ENCODE measurements at regions of chr3 and their contacts with region 1.

Region 1: GRCh38 chr3:149771652-149772271 is 19.5 kb upstream of the COMMD2 start:
- DNase-seq: peak; percentile 48
- ATAC-seq: peak; percentile 51
- H3K4me3 ChIP-seq: no peak overlapping the region
- H3K4me3 Mint-ChIP-seq: no peak overlapping the region
- H3K27ac ChIP-seq: no peak overlapping the region
- H3K27ac Mint-ChIP-seq: no peak overlapping the region
- H3K4me1 ChIP-seq: no peaks in the 10 kb centered on the region
- H3K4me1 Mint-ChIP-seq: no peaks in the 10 kb centered on the region
- H3K27me3 ChIP-seq: no peaks in the 10 kb centered on the region
- H3K27me3 Mint-ChIP-seq: peaks cover 15% of the 10 kb centered on the region
- CTCF ChIP-seq: peak; percentile 75

Region 2: GRCh38 chr3:149752051-149752787 is 19.5 kb before region 1 on chr3 and contains the start of gene COMMD2:
- CTCF ChIA-PET with region 1: interaction called, 14 read pairs
- POLR2A ChIA-PET with region 1: no interaction called
- intact Hi-C with region 1: no loop called
- DNase-seq: peak; percentile 86
- ATAC-seq: peak; percentile 95
- H3K4me3 ChIP-seq: peak within 1 kb of the TSS; percentile 69 to 92 (median 83)
- H3K4me3 Mint-ChIP-seq: peak within 1 kb of the TSS; percentile 98
- H3K27ac ChIP-seq: peak within 1 kb of the TSS; percentile 65 to 84
- H3K27ac Mint-ChIP-seq: peak within 1 kb of the TSS; percentile 96
- H3K4me1 ChIP-seq: peaks cover 11 to 15% of the 10 kb centered on the region in 2 donors
- H3K4me1 Mint-ChIP-seq: peaks cover 27% of the 10 kb centered on the region
- H3K27me3 ChIP-seq: no peaks in the 10 kb centered on the region
- H3K27me3 Mint-ChIP-seq: peaks cover 5% of the 10 kb centered on the region
- CTCF ChIP-seq: peak; percentile 68
- total RNA-seq, gene COMMD2: 45.1 and 47.8 TPM in 2 replicates

Region 3: DNA sequence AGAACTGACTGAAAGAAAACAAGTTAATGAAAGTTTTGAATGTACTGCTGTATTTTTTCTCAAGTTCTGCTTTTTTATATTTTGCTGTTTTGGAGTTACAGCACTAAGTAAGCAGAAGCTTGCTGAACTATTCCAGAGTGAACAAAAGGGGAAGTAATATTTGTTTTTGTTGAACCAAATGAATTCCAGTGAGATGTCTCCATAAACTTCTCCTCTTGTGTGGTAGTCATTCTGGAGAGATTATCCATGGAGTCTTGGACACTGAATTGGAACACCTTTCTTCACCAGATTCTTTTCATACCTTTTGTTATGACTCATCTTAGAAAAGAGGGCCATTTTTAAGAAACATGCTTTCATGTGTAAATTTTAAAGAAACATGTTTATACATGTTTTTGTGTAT is 11.8 kb after region 1 on chr3:
- CTCF ChIA-PET with region 1: interaction called, 22 read pairs
- POLR2A ChIA-PET with region 1: no interaction called
- intact Hi-C with region 1: no loop called
- DNase-seq: peak; percentile 45
- ATAC-seq: peak; percentile 60
- H3K4me3 ChIP-seq: peak overlapping the region in 1 of 5 experiments; percentile 33
- H3K4me3 Mint-ChIP-seq: peak overlapping the region; percentile 55
- H3K27ac ChIP-seq: peak overlapping the region in 1 of 2 donors; percentile 66
- H3K27ac Mint-ChIP-seq: peak overlapping the region; percentile 89
- H3K4me1 ChIP-seq: peaks cover 38 to 42% of the 10 kb centered on the region in 2 donors
- H3K4me1 Mint-ChIP-seq: peaks cover 39% of the 10 kb centered on the region
- H3K27me3 ChIP-seq: no peaks in the 10 kb centered on the region
- H3K27me3 Mint-ChIP-seq: no peaks in the 10 kb centered on the region
- CTCF ChIP-seq: no peak

Measured in B cell (primary cell).